Activated CD8-positive, alpha-beta T cell treated with anti-CD3 and anti-CD28 coated beads for 36 hours (primary cell): ENCODE measurements at regions of chr11 and their contacts with region 1.

Region 1: DNA sequence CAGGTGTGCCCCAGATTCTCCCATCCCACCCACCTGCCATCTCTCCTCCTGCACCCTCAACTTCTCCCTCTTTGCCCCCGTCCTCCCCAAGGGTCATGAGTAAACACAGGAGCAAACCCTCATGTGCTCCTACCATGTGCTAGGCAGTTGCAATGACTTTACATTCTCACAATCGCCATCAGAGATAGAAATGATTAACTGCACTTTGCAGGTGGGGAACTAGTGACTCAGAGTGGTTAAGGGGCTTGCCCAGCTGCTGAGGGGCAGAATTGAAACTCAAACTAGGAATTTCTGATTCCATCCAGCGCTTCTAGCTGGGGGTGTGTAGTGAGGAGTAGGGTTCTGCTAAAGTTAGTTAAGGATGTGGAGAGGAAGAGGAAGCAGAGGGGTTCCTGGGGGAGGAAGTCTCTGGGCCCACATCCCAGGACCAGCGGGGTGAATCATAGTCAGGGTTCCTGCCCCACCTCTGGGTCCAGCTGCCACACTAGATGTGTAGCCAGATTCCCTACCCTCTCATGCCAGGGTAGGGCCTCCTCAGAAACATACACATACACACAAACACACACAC is 16.0 kb upstream of the PRG2 start:
- DNase-seq: peak; percentile 76
- ATAC-seq: peak; percentile 84
- H3K4me3 Mint-ChIP-seq: no peak overlapping the region
- H3K27ac Mint-ChIP-seq: peak overlapping the region; percentile 88
- H3K4me1 Mint-ChIP-seq: peaks cover 63% of the 10 kb centered on the region
- H3K27me3 Mint-ChIP-seq: no peaks in the 10 kb centered on the region
- CTCF ChIP-seq: no peak

Region 2: DNA sequence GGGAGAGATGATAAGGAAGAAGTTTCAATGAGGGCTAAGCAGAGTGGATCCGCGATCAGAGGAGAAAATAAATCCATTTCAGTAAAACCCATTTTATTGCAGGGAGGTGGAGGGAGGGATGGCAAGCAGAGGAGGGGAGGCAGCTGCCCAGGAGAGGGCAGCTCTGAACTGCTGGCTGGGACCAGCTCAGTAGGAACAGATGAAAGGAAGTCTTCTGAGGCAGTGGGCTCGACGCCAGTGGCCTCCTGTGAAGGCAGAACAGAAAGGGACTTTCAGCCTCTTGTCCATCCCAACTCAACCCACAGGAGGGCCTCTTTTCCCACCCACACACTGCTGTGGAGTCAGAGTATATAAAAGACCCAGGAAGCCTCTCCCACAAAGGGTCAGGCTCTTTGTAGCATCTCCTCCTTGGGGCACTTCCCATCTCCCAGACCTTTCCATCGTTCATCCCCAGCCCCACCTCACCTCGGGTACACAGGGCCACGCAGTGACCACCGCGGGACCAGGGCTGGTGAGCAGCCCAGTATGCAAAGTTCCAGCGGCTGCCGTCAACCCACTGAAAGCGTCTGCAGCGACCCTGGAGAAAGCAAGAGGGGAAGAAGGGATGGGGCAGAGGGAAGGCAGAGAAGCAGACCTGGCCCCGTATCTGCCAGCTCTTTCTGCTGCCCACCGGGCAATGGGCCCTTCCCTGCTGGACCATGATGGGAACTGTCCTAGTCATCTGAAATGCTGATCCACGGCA is 19.0 kb before region 1 on chr11:
- CTCF ChIA-PET with region 1: interaction called, 3 read pairs
- POLR2A ChIA-PET with region 1: interaction called, 30 read pairs
- intact Hi-C with region 1: no loop called
- DNase-seq: no peak
- ATAC-seq: no peak
- H3K4me3 Mint-ChIP-seq: no peak overlapping the region
- H3K27ac Mint-ChIP-seq: no peak overlapping the region
- H3K4me1 Mint-ChIP-seq: no peaks in the 10 kb centered on the region
- H3K27me3 Mint-ChIP-seq: no peaks in the 10 kb centered on the region
- CTCF ChIP-seq: no peak

Region 3: DNA sequence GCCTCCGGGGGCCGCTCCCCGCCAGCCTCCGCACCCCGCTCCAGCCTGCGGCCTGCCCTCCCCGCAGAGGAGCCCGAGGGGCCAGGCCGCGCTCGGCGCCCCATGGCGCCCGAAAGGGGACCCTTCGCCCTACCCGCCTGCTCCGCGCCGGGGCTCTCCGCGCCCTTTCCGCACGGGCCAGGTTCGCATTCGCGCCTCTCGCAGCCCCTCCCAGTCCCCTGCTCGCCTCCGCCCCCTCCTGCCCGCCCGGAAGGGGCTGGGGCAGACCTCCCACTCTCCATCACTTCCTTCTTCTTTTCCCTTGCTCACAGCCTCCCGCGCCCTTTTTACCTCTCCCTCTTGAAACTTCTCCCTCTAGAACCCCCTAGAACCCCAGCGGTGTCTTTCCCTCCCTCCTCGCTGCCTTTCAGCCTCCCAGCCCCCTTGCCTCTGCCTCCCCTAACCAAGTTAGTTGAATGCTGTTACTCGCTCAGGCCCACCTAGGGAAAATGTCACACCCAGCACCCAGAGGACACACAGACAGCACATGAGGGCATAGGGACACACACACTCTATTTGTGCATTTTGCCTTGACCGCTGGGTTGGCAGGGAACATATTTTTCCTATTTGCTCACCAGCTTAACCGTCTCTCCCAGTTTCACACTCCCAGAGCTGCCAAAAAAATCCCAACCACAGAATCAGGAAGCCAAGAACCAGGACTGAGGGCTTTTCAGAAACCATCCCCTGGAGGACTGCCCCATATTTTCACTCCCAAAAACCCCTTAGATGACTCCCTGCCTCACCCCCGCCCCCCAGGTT is 20.7 kb after region 1 on chr11 and contains the start of gene SLC43A3:
- CTCF ChIA-PET with region 1: interaction called, 5 read pairs
- POLR2A ChIA-PET with region 1: interaction called, 264 read pairs
- intact Hi-C with region 1: loop called (anchors 2 kb)
- DNase-seq: peak; percentile 85
- ATAC-seq: peak; percentile 74
- H3K4me3 Mint-ChIP-seq: peak within 1 kb of the TSS; percentile 92
- H3K27ac Mint-ChIP-seq: peak within 1 kb of the TSS; percentile 95
- H3K4me1 Mint-ChIP-seq: peaks cover 34% of the 10 kb centered on the region
- H3K27me3 Mint-ChIP-seq: no peaks in the 10 kb centered on the region
- CTCF ChIP-seq: no peak
- total RNA-seq, gene SLC43A3: 294 to 300 TPM